WTC11 (cell line): ENCODE measurements at regions of chr22 and their contacts with region 1.

Region 1: GRCh38 chr22:39395936-39396796 is 3.4 kb upstream of the TAB1 start:
- DNase-seq: no peak
- ATAC-seq: no peak
- H3K4me3 Mint-ChIP-seq: no peak overlapping the region
- H3K27ac Mint-ChIP-seq: no peak overlapping the region
- H3K4me1 Mint-ChIP-seq: peaks cover 7% of the 10 kb centered on the region
- H3K27me3 Mint-ChIP-seq: peaks cover 2% of the 10 kb centered on the region; the same call in 1 of the 2 replicates
- CTCF ChIP-seq: no peak

Region 2: GRCh38 chr22:39197396-39197977 is 198.7 kb before region 1 on chr22:
- CTCF ChIA-PET with region 1: no interaction called
- POLR2A ChIA-PET with region 1: no interaction called
- DNase-seq: no peak
- ATAC-seq: no peak
- H3K4me3 Mint-ChIP-seq: no peak overlapping the region
- H3K27ac Mint-ChIP-seq: no peak overlapping the region
- H3K4me1 Mint-ChIP-seq: peaks cover 10% of the 10 kb centered on the region
- H3K27me3 Mint-ChIP-seq: no peaks in the 10 kb centered on the region; the same call in 1 of the 2 replicates
- CTCF ChIP-seq: no peak

Region 3: GRCh38 chr22:39502109-39502788 is 106.1 kb after region 1 on chr22 and contains the start of gene MIEF1:
- CTCF ChIA-PET with region 1: interaction called, 10 read pairs
- POLR2A ChIA-PET with region 1: no interaction called
- DNase-seq: peak; percentile 96
- ATAC-seq: peak; percentile 97
- H3K4me3 Mint-ChIP-seq: peak within 1 kb of the TSS; percentile 97
- H3K27ac Mint-ChIP-seq: peak within 1 kb of the TSS; percentile 97
- H3K4me1 Mint-ChIP-seq: peaks cover 13% of the 10 kb centered on the region
- H3K27me3 Mint-ChIP-seq: peaks cover 89% of the 10 kb centered on the region
- CTCF ChIP-seq: no peak
- total RNA-seq, gene MIEF1: 31.5 to 38.7 TPM (median 31.9 TPM) in 3 replicates

Region 4: GRCh38 chr22:39800790-39801520 is 404.8 kb after region 1 on chr22:
- CTCF ChIA-PET with region 1: no interaction called
- POLR2A ChIA-PET with region 1: no interaction called
- DNase-seq: no peak
- ATAC-seq: no peak
- H3K4me3 Mint-ChIP-seq: no peak overlapping the region
- H3K27ac Mint-ChIP-seq: no peak overlapping the region
- H3K4me1 Mint-ChIP-seq: 0 out of 2 replicates have a peak, but pooled peaks cover 4% of the 10 kb centered on the region
- H3K27me3 Mint-ChIP-seq: peaks cover 22% of the 10 kb centered on the region
- CTCF ChIP-seq: no peak